Cardiac septum (tissue), 1 donor: ENCODE measurements at regions of chr17 and their contacts with region 1.

Region 1: GRCh38 chr17:15157051-15157450 is 108.1 kb downstream of the PMP22 start:
- DNase-seq: no peak

Region 2: GRCh38 chr17:14886240-14886639 is 270.8 kb before region 1 on chr17:
- intact Hi-C with region 1: loop called (anchors 5 kb)
- DNase-seq: no peak

Region 3: GRCh38 chr17:14926526-14927122 is 230.4 kb before region 1 on chr17:
- intact Hi-C with region 1: loop called (anchors 5 kb)
- DNase-seq: no peak

Region 4: GRCh38 chr17:15029469-15029868 is 127.6 kb before region 1 on chr17:
- intact Hi-C with region 1: no loop called
- DNase-seq: no peak